ENCODE measurements at regions of chr2 and their contacts with region 1.

Region 1: DNA sequence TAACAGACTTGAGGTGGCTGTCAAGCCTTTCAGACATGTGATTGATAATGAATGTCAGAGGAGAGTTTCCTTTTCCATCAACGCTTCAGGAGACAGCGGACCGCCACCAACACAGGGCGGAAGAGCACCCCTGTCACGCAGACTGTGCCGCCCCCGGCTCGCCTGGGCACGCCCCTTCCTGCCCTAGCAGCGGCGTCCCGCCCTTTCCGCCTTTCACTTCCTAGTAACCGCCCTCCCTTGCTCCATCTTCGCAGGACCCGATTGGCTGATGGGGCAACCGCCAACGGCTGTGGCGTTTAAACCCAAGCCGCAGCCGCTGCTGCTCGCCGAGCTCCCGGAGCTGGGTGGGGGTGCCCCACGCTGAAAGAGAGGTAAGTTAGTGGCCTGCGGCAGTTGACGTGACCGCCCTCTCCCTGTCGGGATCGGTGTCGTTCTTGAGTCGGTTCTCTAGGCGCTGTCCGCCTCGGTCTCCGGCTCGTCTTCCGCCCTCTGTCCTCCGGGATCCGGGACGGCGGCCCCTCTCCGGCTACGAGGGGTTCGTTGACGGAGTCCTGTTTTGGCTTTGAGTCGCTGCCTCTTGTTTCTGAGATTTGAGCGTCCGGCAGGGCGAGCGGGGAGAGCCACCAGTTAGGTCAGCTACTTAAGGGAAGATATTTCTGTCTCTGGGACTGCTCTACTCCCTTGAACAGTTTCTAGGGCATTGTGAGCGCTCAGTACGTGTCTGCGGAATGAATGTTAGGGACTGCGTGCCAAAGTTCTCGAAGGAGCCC is at the start of gene SGO2:
- DNase-seq: peak; percentile 89 to 93
- ATAC-seq: peak; percentile 100
- H3K4me3 ChIP-seq: peak within 1 kb of the TSS; percentile 64
- H3K27ac ChIP-seq: peak within 1 kb of the TSS; percentile 72 to 92
- H3K4me1 ChIP-seq: peaks cover 16% of the 10 kb centered on the region; the same call in 2 of the 3 replicates
- CTCF ChIP-seq: no peak
- EP300 ChIP-seq: no peak
- POLR2A ChIP-seq: peak; percentile 90
- RAD21 ChIP-seq: no peak
- polyA plus RNA-seq, gene SGO2: 14.2 and 26.2 TPM in 2 replicates

Region 2: GRCh38 chr2:200338701-200339100 is 187.4 kb before region 1 on chr2:
- CTCF ChIA-PET with region 1: no interaction called
- POLR2A ChIA-PET with region 1: no interaction called
- DNase-seq: no peak
- ATAC-seq: no peak
- H3K4me3 ChIP-seq: no peak overlapping the region
- H3K27ac ChIP-seq: peak overlapping the region in 1 of 2 experiments; percentile 48; a peak in 1 of 6 replicates
- H3K4me1 ChIP-seq: peaks cover 41% of the 10 kb centered on the region
- CTCF ChIP-seq: no peak
- EP300 ChIP-seq: no peak
- POLR2A ChIP-seq: no peak
- RAD21 ChIP-seq: no peak

Region 3: GRCh38 chr2:200509612-200510433 is 16.2 kb before region 1 on chr2 and contains the start of gene KCTD18:
- CTCF ChIA-PET with region 1: interaction called, 14 read pairs
- POLR2A ChIA-PET with region 1: no interaction called
- DNase-seq: peak; percentile 85 to 87
- ATAC-seq: peak; percentile 97 to 98
- H3K4me3 ChIP-seq: peak within 1 kb of the TSS; percentile 59
- H3K27ac ChIP-seq: peak within 1 kb of the TSS; percentile 87 to 99
- H3K4me1 ChIP-seq: peaks cover 21% of the 10 kb centered on the region
- CTCF ChIP-seq: peak; percentile 78
- EP300 ChIP-seq: no peak
- POLR2A ChIP-seq: peak; percentile 56
- RAD21 ChIP-seq: peak; percentile 48 to 71
- polyA plus RNA-seq, gene KCTD18: 15.3 and 21.3 TPM in 2 replicates

Region 4: DNA sequence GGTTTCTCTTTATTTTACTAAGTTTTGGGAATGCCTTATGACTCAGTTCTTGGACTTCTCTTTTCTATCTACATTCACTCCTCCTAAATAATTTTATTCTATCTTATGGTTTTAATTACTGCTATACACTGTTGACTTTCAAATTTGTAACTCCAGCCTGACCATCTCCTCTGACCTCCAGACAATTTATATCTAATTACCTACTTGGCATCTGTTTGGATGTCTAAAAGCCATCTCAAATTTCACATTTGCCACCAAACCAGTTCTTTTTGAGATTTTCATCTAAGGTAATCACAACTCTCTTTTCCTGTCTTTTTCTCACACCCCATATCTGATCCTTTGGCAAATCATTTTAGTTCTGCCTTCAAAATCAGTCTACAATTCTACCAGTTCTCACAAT is 11.5 kb after region 1 on chr2:
- CTCF ChIA-PET with region 1: interaction called, 13 read pairs
- POLR2A ChIA-PET with region 1: no interaction called
- DNase-seq: no peak
- ATAC-seq: no peak
- H3K4me3 ChIP-seq: no peak overlapping the region
- H3K27ac ChIP-seq: no peak overlapping the region
- H3K4me1 ChIP-seq: no peaks in the 10 kb centered on the region
- CTCF ChIP-seq: no peak
- EP300 ChIP-seq: no peak
- POLR2A ChIP-seq: no peak
- RAD21 ChIP-seq: no peak